Activated CD8-positive, alpha-beta T cell treated with anti-CD3 and anti-CD28 coated beads, Interleukin-2, amount 10 ng/mL, durations not matched to agents 7 days and 5 days (primary cell): ENCODE measurements at regions of chr1 and their contacts with region 1.

Region 1: GRCh38 chr1:66436378-66437145 is 97.4 kb upstream of the SGIP1 start:
- DNase-seq: peak; percentile 64
- ATAC-seq: peak; percentile 86
- H3K4me3 Mint-ChIP-seq: no peak overlapping the region
- H3K27ac Mint-ChIP-seq: no peak overlapping the region
- H3K4me1 Mint-ChIP-seq: peaks cover 36% of the 10 kb centered on the region
- H3K27me3 Mint-ChIP-seq: no peaks in the 10 kb centered on the region

Region 2: DNA sequence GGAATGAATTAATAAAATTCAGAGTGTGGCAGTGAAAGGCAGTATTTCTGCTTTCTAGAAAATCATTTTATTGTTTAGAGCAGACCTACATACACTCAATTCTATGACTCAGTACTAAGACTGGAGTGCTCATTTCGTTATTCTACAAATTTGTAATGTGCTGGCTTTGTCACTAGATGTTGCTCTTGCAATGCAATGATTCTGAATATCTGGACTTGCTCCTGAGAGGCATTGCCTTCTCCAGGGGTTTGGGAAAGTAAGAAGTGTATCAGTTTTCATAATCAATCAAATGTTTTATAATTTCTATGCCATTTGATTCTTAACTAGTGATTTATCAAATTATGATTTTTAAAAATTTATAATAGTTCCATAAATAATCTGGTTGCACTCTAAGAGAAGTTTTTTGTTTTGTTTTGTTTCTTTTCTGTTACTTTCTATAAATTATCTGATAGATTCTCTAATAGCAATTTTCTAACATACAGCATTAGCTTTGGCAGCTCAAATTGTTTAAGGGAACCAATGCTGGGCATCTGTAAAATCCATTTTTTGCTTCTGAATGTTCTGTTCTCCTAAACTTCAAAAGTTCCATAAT is 183.1 kb before region 1 on chr1:
- CTCF ChIA-PET with region 1: interaction called, 703 read pairs
- POLR2A ChIA-PET with region 1: no interaction called
- DNase-seq: peak; percentile 46
- ATAC-seq: peak; percentile 83
- H3K4me3 Mint-ChIP-seq: no peak overlapping the region
- H3K27ac Mint-ChIP-seq: no peak overlapping the region
- H3K4me1 Mint-ChIP-seq: peaks cover 37% of the 10 kb centered on the region
- H3K27me3 Mint-ChIP-seq: no peaks in the 10 kb centered on the region

Region 3: GRCh38 chr1:66300972-66301451 is 135.6 kb before region 1 on chr1:
- CTCF ChIA-PET with region 1: interaction called, 22 read pairs
- POLR2A ChIA-PET with region 1: no interaction called
- DNase-seq: peak; percentile 49
- ATAC-seq: peak; percentile 79
- H3K4me3 Mint-ChIP-seq: peak overlapping the region; percentile 77
- H3K27ac Mint-ChIP-seq: peak overlapping the region; percentile 88
- H3K4me1 Mint-ChIP-seq: peaks cover 41% of the 10 kb centered on the region
- H3K27me3 Mint-ChIP-seq: no peaks in the 10 kb centered on the region

Region 4: DNA sequence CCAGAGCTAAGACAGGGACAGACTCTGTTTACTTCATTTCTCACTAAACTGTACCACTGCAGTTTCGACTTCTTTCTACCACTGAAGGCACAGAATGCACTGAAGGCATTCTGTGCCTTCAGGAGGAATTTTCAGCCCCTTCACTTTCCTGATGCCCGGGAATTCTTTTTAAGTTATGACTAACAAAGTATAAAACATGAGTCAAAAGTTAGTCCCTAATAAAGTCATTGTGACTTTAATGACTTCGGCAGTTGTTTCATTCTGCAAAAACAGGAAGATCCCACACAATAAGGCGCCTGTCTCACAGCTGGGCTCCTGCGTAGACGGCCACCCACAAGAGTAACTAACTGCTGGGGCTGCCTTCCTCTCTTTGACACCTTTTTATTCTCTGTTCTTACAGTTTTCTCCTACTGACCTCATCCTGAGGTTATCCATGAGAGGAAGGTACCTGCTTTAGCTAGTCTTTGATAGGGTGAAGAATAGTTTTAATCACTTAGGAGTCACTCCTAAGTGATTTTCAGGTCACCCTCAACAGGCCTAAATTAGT is 86.5 kb before region 1 on chr1:
- CTCF ChIA-PET with region 1: interaction called, 20 read pairs
- POLR2A ChIA-PET with region 1: no interaction called
- DNase-seq: peak; percentile 60
- ATAC-seq: peak; percentile 67
- H3K4me3 Mint-ChIP-seq: peak overlapping the region; percentile 77
- H3K27ac Mint-ChIP-seq: peak overlapping the region; percentile 84
- H3K4me1 Mint-ChIP-seq: peaks cover 88% of the 10 kb centered on the region
- H3K27me3 Mint-ChIP-seq: no peaks in the 10 kb centered on the region

Region 5: DNA sequence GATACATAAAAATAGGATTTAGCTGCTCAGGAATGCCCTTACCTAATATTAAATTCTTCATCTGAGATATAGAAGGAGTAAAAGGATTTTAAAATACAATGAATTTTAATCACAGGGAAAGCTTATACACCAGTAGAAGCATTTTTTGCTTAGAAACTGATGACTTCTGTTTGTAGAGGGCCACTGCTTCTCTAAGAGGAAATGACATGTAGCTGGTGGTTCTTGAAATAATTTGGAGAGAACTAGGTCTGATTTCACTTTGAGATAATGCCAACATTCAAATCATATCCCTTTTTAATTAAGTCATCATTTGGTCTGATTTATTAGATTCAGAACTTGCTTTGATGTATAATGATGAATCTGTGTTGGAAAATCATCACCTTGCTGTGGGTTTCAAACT is 69.2 kb before region 1 on chr1:
- CTCF ChIA-PET with region 1: interaction called, 45 read pairs
- POLR2A ChIA-PET with region 1: interaction called, 3 read pairs
- DNase-seq: no peak
- ATAC-seq: no peak
- H3K4me3 Mint-ChIP-seq: no peak overlapping the region
- H3K27ac Mint-ChIP-seq: peak overlapping the region; percentile 51
- H3K4me1 Mint-ChIP-seq: peaks cover 65% of the 10 kb centered on the region
- H3K27me3 Mint-ChIP-seq: no peaks in the 10 kb centered on the region

Region 6: GRCh38 chr1:66426239-66426853 is 10.2 kb before region 1 on chr1:
- CTCF ChIA-PET with region 1: interaction called, 15 read pairs
- POLR2A ChIA-PET with region 1: no interaction called
- DNase-seq: no peak
- ATAC-seq: peak; percentile 27
- H3K4me3 Mint-ChIP-seq: no peak overlapping the region
- H3K27ac Mint-ChIP-seq: no peak overlapping the region
- H3K4me1 Mint-ChIP-seq: peaks cover 15% of the 10 kb centered on the region
- H3K27me3 Mint-ChIP-seq: no peaks in the 10 kb centered on the region

Region 7: GRCh38 chr1:66460776-66461175 is 24.2 kb after region 1 on chr1:
- CTCF ChIA-PET with region 1: no interaction called
- POLR2A ChIA-PET with region 1: no interaction called
- DNase-seq: no peak
- ATAC-seq: no peak
- H3K4me3 Mint-ChIP-seq: no peak overlapping the region
- H3K27ac Mint-ChIP-seq: no peak overlapping the region
- H3K4me1 Mint-ChIP-seq: no peaks in the 10 kb centered on the region
- H3K27me3 Mint-ChIP-seq: peaks cover 9% of the 10 kb centered on the region

Region 8: GRCh38 chr1:66521721-66522365 is 85.3 kb after region 1 on chr1:
- CTCF ChIA-PET with region 1: no interaction called
- POLR2A ChIA-PET with region 1: no interaction called
- DNase-seq: no peak
- ATAC-seq: no peak
- H3K4me3 Mint-ChIP-seq: no peak overlapping the region
- H3K27ac Mint-ChIP-seq: no peak overlapping the region
- H3K4me1 Mint-ChIP-seq: no peaks in the 10 kb centered on the region
- H3K27me3 Mint-ChIP-seq: no peaks in the 10 kb centered on the region

Region 9: DNA sequence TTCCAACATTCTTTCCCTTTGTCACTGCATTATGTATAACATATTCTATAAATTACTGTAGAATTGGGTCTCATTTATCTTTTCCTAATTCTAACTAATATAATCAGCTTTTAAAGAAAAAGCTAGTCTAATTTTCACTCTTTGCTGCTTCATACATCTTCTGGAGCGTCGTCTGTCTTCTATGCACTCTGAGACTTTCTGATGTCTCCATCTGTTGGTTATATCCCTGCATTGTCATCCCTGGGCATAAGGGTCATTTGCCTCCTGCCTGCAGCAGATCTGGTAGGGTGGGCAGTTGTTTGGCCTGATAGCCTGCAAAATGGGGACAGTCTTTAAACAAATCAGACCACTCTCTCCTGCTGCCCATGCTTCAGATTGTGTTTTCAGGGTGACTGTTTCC is 274.9 kb after region 1 on chr1:
- CTCF ChIA-PET with region 1: no interaction called
- POLR2A ChIA-PET with region 1: no interaction called
- DNase-seq: no peak
- ATAC-seq: no peak
- H3K4me3 Mint-ChIP-seq: no peak overlapping the region
- H3K27ac Mint-ChIP-seq: no peak overlapping the region
- H3K4me1 Mint-ChIP-seq: no peaks in the 10 kb centered on the region
- H3K27me3 Mint-ChIP-seq: peaks cover 9% of the 10 kb centered on the region